Naive thymus-derived CD4-positive, alpha-beta T cell (primary cell): ENCODE measurements at regions of chr9 and their contacts with region 1.

Region 1: GRCh38 chr9:36102742-36103495 is 33.6 kb upstream of the GLIPR2 start:
- DNase-seq: peak; percentile 70 to 87 (median 82)
- ATAC-seq: peak; percentile 100
- H3K4me3 ChIP-seq: no peak overlapping the region
- H3K4me3 Mint-ChIP-seq: no peak overlapping the region
- H3K27ac ChIP-seq: no peak overlapping the region
- H3K27ac Mint-ChIP-seq: peak overlapping the region in 4 of 9 donors; percentile 12 to 76 (median 61)
- H3K4me1 ChIP-seq: peaks cover 0 to 5% of the 10 kb centered on the region in 2 donors
- H3K4me1 Mint-ChIP-seq: peaks cover 5 to 8% (median 8%) of the 10 kb centered on the region in 7 donors
- H3K27me3 ChIP-seq: no peaks in the 10 kb centered on the region
- H3K27me3 Mint-ChIP-seq: no peaks in the 10 kb centered on the region

Region 2: DNA sequence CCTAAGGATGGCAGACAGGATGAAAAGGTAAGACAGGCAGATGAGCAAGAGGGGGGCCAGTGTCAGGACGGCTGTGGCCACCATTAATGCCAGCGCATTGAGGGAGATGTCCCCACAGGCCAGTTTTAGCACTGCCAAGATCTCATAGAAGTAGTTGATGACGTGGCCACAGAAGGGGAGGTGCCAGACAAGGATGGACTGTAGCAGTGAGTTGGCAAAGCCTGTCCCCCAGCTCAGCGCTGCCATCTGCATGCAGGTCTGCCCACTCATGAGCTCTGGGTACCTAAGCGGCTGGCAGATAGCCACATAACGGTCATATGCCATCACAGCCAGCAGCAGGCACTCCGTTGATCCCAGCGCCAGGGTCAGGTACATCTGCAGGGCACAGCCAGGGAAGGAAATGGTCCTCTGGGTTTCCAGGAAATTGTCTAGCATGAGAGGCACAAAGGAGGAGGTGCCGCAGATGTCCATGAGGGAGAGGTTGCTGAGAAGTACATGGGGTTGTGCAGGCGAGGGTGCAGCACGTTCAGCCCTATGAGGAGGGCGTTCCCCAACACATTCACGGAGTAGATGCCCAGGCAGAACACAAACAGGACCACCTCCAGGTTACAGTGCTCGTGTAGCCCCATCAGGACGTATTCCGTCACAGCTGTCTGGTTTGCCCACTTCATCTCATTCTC is 243.5 kb before region 1 on chr9:
- CTCF ChIA-PET with region 1: no interaction called
- POLR2A ChIA-PET with region 1: no interaction called
- intact Hi-C with region 1: no loop called
- DNase-seq: peak in 1 of 9 donors; percentile 17
- ATAC-seq: peak; percentile 76
- H3K4me3 ChIP-seq: no peak overlapping the region
- H3K4me3 Mint-ChIP-seq: no peak overlapping the region
- H3K27ac ChIP-seq: no peak overlapping the region
- H3K27ac Mint-ChIP-seq: peak overlapping the region in 1 of 9 donors; percentile 39
- H3K4me1 ChIP-seq: no peaks in the 10 kb centered on the region
- H3K4me1 Mint-ChIP-seq: peaks cover 0 to 13% (median 3%) of the 10 kb centered on the region in 7 donors
- H3K27me3 ChIP-seq: no peaks in the 10 kb centered on the region
- H3K27me3 Mint-ChIP-seq: peaks cover 0 to 21% (median 17%) of the 10 kb centered on the region in 5 donors

Region 3: GRCh38 chr9:36116593-36116992 is 13.7 kb after region 1 on chr9:
- CTCF ChIA-PET with region 1: interaction called, 22 read pairs
- POLR2A ChIA-PET with region 1: no interaction called
- intact Hi-C with region 1: no loop called
- DNase-seq: no peak
- ATAC-seq: no peak
- H3K4me3 ChIP-seq: no peak overlapping the region
- H3K4me3 Mint-ChIP-seq: no peak overlapping the region
- H3K27ac ChIP-seq: no peak overlapping the region
- H3K27ac Mint-ChIP-seq: peak overlapping the region in 2 of 9 donors; percentile 0 to 72
- H3K4me1 ChIP-seq: no peaks in the 10 kb centered on the region
- H3K4me1 Mint-ChIP-seq: peaks cover 0 to 6% (median 0%) of the 10 kb centered on the region in 7 donors
- H3K27me3 ChIP-seq: no peaks in the 10 kb centered on the region
- H3K27me3 Mint-ChIP-seq: no peaks in the 10 kb centered on the region

Region 4: DNA sequence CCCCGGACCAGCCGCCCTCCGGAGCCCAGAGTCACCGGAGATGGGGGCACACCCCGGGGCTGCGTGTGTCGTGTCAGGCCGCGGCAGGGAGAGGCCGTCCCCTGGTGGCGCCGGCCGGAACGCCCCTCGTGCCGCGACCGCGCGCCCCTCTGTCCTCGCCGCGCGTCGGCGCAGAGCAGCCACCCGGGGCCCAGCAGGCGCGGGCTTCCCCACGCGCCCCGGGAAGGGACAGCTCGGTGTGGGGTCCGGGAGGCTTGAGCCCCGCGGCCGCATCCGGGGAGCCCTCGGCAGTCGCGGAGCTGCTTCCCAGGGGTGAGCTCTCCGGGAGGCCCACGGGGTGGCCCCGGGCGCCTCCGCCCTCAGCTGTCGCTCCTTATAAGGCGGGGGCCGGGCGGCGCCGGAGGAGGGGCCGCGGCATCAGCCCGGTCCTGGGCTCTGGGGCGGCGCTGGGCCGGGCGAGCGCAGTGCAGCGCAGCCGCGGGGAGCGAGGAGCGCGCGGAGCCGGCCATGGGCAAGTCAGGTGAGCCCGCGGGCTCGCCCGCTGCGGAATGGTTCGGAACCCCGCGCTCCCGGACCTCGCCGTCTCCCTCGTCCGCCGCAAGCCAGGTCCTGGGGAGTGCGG is 33.5 kb after region 1 on chr9 and contains the start of gene GLIPR2:
- CTCF ChIA-PET with region 1: interaction called, 5 read pairs
- POLR2A ChIA-PET with region 1: no interaction called
- intact Hi-C with region 1: loop called (anchors 1 to 5 kb)
- DNase-seq: peak; percentile 60 to 88 (median 69)
- ATAC-seq: peak; percentile 97
- H3K4me3 ChIP-seq: peak within 1 kb of the TSS; percentile 78
- H3K4me3 Mint-ChIP-seq: peak within 1 kb of the TSS; percentile 83 to 99 (median 93)
- H3K27ac ChIP-seq: peak within 1 kb of the TSS; percentile 74
- H3K27ac Mint-ChIP-seq: peak within 1 kb of the TSS; percentile 25 to 94 (median 87)
- H3K4me1 ChIP-seq: peaks cover 43 to 49% of the 10 kb centered on the region in 2 donors
- H3K4me1 Mint-ChIP-seq: peaks cover 43 to 52% (median 49%) of the 10 kb centered on the region in 7 donors
- H3K27me3 ChIP-seq: no peaks in the 10 kb centered on the region
- H3K27me3 Mint-ChIP-seq: peaks cover 0 to 39% (median 0%) of the 10 kb centered on the region in 5 donors
- total RNA-seq, gene GLIPR2: 7.7 to 74.7 (median 18.6) TPM

Region 5: GRCh38 chr9:36151316-36152210 is 48.6 kb after region 1 on chr9:
- CTCF ChIA-PET with region 1: interaction called, 6 read pairs
- POLR2A ChIA-PET with region 1: interaction called, 4 read pairs
- intact Hi-C with region 1: loop called in 1 of 2 experiments (anchors 1 kb)
- DNase-seq: peak; percentile 63 to 91 (median 87)
- ATAC-seq: peak; percentile 94
- H3K4me3 ChIP-seq: peak overlapping the region; percentile 53
- H3K4me3 Mint-ChIP-seq: peak overlapping the region; percentile 74 to 91 (median 88)
- H3K27ac ChIP-seq: peak overlapping the region; percentile 88
- H3K27ac Mint-ChIP-seq: peak overlapping the region; percentile 97 to 99 (median 99)
- H3K4me1 ChIP-seq: peaks cover 63 to 68% of the 10 kb centered on the region in 2 donors
- H3K4me1 Mint-ChIP-seq: peaks cover 46 to 68% (median 61%) of the 10 kb centered on the region in 7 donors
- H3K27me3 ChIP-seq: no peaks in the 10 kb centered on the region
- H3K27me3 Mint-ChIP-seq: no peaks in the 10 kb centered on the region

Region 6: GRCh38 chr9:36328798-36329411 is 226.0 kb after region 1 on chr9:
- CTCF ChIA-PET with region 1: interaction called, 4 read pairs
- POLR2A ChIA-PET with region 1: no interaction called
- intact Hi-C with region 1: loop called in 1 of 2 experiments (anchors 1 kb)
- DNase-seq: peak in 7 of 9 donors; percentile 33 to 70 (median 62)
- ATAC-seq: peak; percentile 74
- H3K4me3 ChIP-seq: no peak overlapping the region
- H3K4me3 Mint-ChIP-seq: no peak overlapping the region
- H3K27ac ChIP-seq: no peak overlapping the region
- H3K27ac Mint-ChIP-seq: peak overlapping the region in 1 of 9 donors; percentile 36
- H3K4me1 ChIP-seq: no peaks in the 10 kb centered on the region
- H3K4me1 Mint-ChIP-seq: peaks cover 0 to 16% (median 4%) of the 10 kb centered on the region in 7 donors
- H3K27me3 ChIP-seq: no peaks in the 10 kb centered on the region
- H3K27me3 Mint-ChIP-seq: no peaks in the 10 kb centered on the region